ENCODE measurements at regions of chr20 and their contacts with region 1.

Region 1: GRCh38 chr20:10673988-10674711 is at the start of gene JAG1:
- DNase-seq: peak; percentile 96 to 97
- H3K4me3 ChIP-seq: peak within 1 kb of the TSS; percentile 45 to 77 (median 58)
- H3K27ac ChIP-seq: peak within 1 kb of the TSS; percentile 95 to 99 (median 98)
- H3K4me1 ChIP-seq: peaks cover 25 to 30% of the 10 kb centered on the region in 2 donors
- H3K27me3 ChIP-seq: no peaks in the 10 kb centered on the region
- CTCF ChIP-seq: no peak
- POLR2A ChIP-seq: peak; percentile 88 to 96
- total RNA-seq, gene JAG1: 41.2 to 67.9 (median 46.2) TPM

Region 2: DNA sequence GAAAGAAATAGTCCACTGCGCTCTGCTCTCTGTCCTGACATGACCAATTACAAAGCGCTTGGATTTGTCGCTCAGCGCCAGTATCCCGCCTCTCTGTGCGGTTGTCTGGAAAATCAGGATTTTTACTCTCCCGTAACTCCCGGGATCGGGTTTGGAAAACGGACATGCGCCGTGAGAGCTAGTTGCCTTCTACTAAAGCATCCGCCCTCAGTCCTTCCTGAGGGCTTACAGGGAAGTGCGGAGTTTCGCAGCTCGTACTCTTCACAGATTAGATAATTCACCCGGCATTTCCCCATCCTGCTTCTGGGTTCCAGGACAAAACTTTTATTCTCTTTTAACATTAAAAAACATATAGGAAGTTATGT is 239.7 kb before region 1 on chr20:
- intact Hi-C with region 1: loop called (anchors 10 kb)
- DNase-seq: peak; percentile 92 to 94
- H3K4me3 ChIP-seq: peak overlapping the region; percentile 80 to 81 (median 81)
- H3K27ac ChIP-seq: peak overlapping the region; percentile 82 to 94 (median 90)
- H3K4me1 ChIP-seq: peaks cover 15 to 22% of the 10 kb centered on the region in 2 donors
- H3K27me3 ChIP-seq: no peaks in the 10 kb centered on the region
- CTCF ChIP-seq: no peak
- POLR2A ChIP-seq: peak; percentile 49 to 81

Region 3: GRCh38 chr20:10558635-10559187 is 115.4 kb before region 1 on chr20:
- intact Hi-C with region 1: loop called (anchors 5 kb)
- DNase-seq: no peak
- H3K4me3 ChIP-seq: no peak overlapping the region
- H3K27ac ChIP-seq: peak overlapping the region; percentile 49 to 71 (median 61)
- H3K4me1 ChIP-seq: peaks cover 28 to 37% of the 10 kb centered on the region in 2 donors
- H3K27me3 ChIP-seq: no peaks in the 10 kb centered on the region
- CTCF ChIP-seq: no peak
- POLR2A ChIP-seq: no peak

Region 4: DNA sequence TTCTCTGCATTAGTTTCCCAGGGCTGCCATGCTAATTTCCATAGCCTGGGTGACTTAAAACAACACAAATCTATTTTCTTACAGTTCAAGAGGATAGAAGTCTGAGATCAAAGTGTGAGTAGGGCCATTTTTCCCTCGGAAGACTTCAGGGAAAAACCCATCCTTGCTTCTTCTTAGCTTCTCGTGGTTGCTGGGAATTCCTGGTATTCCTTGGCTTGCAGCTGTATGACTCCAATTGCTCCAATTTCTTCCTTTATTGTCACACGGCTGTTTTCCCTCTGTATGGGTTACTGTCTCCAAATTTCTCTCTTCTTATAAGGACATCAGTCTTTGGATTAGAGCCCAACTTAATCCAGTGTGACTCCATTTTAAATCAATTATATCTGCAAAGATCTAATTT is 128.1 kb after region 1 on chr20:
- intact Hi-C with region 1: no loop called
- DNase-seq: no peak
- H3K4me3 ChIP-seq: no peak overlapping the region
- H3K27ac ChIP-seq: no peak overlapping the region
- H3K4me1 ChIP-seq: no peaks in the 10 kb centered on the region
- H3K27me3 ChIP-seq: no peaks in the 10 kb centered on the region
- CTCF ChIP-seq: no peak
- POLR2A ChIP-seq: no peak

Measured in thyroid gland (tissue), 4 donors.